Activated naive CD4-positive, alpha-beta T cell treated with anti-CD3 and anti-CD28 coated beads, Interleukin-2, amount 10 ng/mL, durations not matched to agents 7 days and 5 days (primary cell): ENCODE measurements at regions of chr21 and their contacts with region 1.

Region 1: GRCh38 chr21:36319765-36320420 is at the start of gene MORC3:
- DNase-seq: peak; percentile 98
- H3K4me3 Mint-ChIP-seq: peak within 1 kb of the TSS; percentile 94
- H3K27ac Mint-ChIP-seq: peak within 1 kb of the TSS; percentile 99
- H3K4me1 Mint-ChIP-seq: peaks cover 35% of the 10 kb centered on the region
- H3K27me3 Mint-ChIP-seq: peaks cover 14% of the 10 kb centered on the region

Region 2: GRCh38 chr21:36297921-36298594 is 21.8 kb before region 1 on chr21:
- CTCF ChIA-PET with region 1: interaction called, 17 read pairs
- DNase-seq: peak; percentile 87
- H3K4me3 Mint-ChIP-seq: peak overlapping the region; percentile 69
- H3K27ac Mint-ChIP-seq: peak overlapping the region; percentile 95
- H3K4me1 Mint-ChIP-seq: peaks cover 61% of the 10 kb centered on the region
- H3K27me3 Mint-ChIP-seq: no peaks in the 10 kb centered on the region

Region 3: GRCh38 chr21:36330904-36331303 is 11.0 kb after region 1 on chr21:
- CTCF ChIA-PET with region 1: interaction called, 13 read pairs
- DNase-seq: peak; percentile 70
- H3K4me3 Mint-ChIP-seq: no peak overlapping the region
- H3K27ac Mint-ChIP-seq: peak overlapping the region; percentile 74
- H3K4me1 Mint-ChIP-seq: peaks cover 36% of the 10 kb centered on the region
- H3K27me3 Mint-ChIP-seq: no peaks in the 10 kb centered on the region

Region 4: DNA sequence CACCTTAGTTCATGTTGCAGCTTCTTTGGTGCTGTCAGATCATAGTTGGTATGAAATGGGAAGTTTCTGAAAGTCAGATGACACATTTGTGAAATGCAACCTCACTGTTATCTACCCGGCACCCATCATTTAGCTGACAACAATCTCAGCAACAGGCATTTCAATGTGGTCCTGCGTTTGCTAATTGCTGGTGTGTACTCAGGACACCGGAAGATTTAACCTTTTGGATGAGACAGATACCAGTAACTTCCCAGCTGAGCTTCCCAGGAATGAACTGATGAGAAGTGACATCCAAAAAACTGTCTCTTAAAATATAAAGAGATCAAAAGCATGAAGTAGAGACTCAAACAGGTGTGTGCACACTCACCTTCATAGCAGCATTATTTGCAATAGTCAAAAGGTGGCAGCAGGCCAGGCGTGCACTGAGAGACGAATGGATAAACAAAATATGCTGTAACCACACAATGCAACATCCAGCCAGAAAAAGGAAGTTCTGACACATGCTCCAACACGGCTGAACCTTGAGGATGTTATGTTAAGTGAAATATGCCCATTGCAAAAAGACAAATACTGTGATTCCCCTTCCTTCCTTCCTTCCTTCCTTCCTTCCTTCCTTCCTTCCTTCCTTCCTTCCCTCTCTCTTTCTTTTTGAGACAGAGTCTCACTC is 167.9 kb after region 1 on chr21:
- CTCF ChIA-PET with region 1: no interaction called
- DNase-seq: no peak
- H3K4me3 Mint-ChIP-seq: no peak overlapping the region
- H3K27ac Mint-ChIP-seq: no peak overlapping the region
- H3K4me1 Mint-ChIP-seq: no peaks in the 10 kb centered on the region
- H3K27me3 Mint-ChIP-seq: peaks cover 13% of the 10 kb centered on the region